ENCODE measurements at regions of chr6 and their contacts with region 1.

Region 1: DNA sequence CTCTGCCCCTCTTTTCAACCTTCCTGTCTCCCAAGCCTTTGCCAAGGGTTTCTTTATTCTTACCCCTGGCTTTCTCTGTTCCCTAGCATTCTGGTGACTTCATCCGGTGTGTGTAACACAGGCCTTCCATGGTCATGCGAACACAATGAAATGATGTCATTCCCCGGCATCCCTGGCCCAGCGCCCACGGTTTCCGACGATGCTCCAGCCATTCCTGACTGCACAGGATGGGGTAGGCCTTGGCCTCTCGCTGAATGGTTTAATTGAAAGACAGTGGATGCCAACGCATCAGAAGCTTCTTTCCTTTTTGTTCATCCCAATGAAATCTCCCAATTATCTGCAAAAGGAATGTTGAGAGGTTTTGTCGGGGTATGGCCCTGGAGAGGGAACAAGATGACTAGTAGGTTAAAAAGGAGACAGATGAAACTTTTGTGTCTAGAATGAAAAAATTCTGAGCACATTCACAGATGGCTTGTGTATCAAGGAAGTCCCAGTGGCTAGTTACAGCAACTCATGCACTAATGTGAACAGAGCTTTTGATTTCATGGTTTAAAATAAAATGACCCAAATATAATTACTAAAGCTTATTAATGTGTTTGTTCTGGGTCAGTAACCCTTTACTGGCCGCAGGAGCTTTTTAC is 655.0 kb downstream of the QKI start:
- DNase-seq: peak; percentile 74 to 86 (median 83)
- ATAC-seq: peak; percentile 85 to 98 (median 88)
- H3K4me3 ChIP-seq: no peak overlapping the region
- H3K27ac ChIP-seq: peak overlapping the region in 11 of 12 donors; percentile 43 to 78 (median 69)
- H3K4me1 ChIP-seq: peaks cover 0 to 17% (median 1%) of the 10 kb centered on the region in 12 donors
- H3K27me3 ChIP-seq: no peaks in the 10 kb centered on the region
- CTCF ChIP-seq: no peak
- POLR2A ChIP-seq: no peak

Region 2: GRCh38 chr6:163501026-163501425 is 568.4 kb before region 1 on chr6:
- intact Hi-C with region 1: no loop called
- DNase-seq: no peak
- ATAC-seq: no peak
- H3K4me3 ChIP-seq: no peak overlapping the region
- H3K27ac ChIP-seq: peak overlapping the region in 4 of 12 donors; percentile 7 to 23 (median 18)
- H3K4me1 ChIP-seq: peaks cover 6 to 93% (median 67%) of the 10 kb centered on the region in 12 donors
- H3K27me3 ChIP-seq: no peaks in the 10 kb centered on the region
- CTCF ChIP-seq: peak in 1 of 12 donors; percentile 16
- POLR2A ChIP-seq: no peak

Region 3: DNA sequence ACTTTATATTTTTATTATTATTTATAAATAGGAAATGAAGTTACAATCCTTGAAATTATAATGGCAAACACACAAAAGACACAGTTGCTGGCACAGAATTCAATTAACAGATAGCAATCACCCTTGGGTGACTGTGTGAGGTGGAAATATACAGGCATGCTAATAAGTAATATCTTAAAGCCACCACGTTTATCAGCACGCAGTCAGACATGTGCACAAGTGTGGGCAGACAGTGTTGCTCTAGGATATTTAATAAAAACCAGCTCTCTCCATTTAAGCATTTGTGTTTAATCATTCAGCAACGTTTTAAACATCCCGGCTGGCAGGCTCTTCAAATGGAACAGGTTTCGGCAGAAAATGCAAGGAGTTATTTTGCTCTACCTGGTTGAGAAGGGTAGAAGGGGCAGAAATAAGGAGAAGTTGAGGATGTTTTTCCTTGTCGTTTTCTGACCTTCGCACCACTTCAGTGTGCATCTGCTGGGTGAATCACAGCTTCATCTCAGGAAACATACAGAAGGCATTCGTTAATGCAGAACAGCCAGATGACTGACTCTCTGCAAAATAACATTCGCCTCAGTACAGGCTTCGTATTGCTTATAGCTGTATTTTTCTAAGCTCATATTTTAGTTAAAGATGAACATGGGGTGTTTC is 69.9 kb before region 1 on chr6:
- intact Hi-C with region 1: no loop called
- DNase-seq: no peak
- ATAC-seq: no peak
- H3K4me3 ChIP-seq: no peak overlapping the region
- H3K27ac ChIP-seq: no peak overlapping the region
- H3K4me1 ChIP-seq: peaks cover 0 to 9% (median 0%) of the 10 kb centered on the region in 12 donors
- H3K27me3 ChIP-seq: no peaks in the 10 kb centered on the region
- CTCF ChIP-seq: no peak
- POLR2A ChIP-seq: no peak

Region 4: DNA sequence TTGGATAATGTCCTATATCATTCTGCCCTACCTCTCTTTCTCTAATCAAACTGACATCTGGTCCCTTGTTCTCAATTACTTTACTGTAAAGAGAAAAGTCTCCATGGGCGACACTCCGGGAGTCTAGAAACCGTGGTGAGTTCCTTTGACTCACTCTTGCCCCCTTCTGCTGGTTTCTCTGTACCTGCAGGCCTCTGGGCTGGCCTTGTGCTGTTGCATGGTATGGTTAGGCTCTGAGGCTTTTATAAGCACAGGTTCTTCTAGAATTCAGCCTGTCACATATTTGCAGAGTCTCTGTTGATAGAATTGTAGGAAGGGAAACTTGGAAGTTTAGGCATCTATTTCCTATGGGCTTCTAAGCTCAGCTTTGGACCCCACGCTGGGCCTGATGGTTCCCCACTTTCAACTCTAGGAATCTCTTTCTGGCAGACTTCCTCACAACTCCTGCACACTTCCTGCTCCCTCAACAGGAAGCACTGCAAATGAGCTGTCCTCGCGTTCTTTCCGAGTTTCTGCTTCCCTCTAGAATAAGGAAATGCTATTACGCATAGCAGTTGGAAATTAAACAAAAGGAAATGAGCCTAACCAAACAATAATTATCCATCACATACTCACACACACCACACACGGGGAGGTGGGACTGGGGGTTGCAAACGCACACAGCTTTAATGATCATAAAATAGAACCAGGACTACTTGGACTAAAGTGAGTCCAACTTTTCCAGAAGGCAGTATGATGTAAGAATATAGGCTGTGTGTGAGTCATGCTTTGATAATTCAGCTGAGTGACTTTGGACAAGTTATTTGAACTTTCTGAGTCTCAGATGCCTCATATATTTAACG is 28.3 kb after region 1 on chr6:
- intact Hi-C with region 1: loop called in 1 of 10 experiments (anchors 2 kb)
- DNase-seq: peak in 3 of 5 donors; percentile 54 to 68 (median 59)
- ATAC-seq: peak; percentile 39 to 78 (median 52)
- H3K4me3 ChIP-seq: no peak overlapping the region
- H3K27ac ChIP-seq: peak overlapping the region; percentile 18 to 91 (median 84)
- H3K4me1 ChIP-seq: peaks cover 3 to 45% (median 30%) of the 10 kb centered on the region in 12 donors
- H3K27me3 ChIP-seq: no peaks in the 10 kb centered on the region
- CTCF ChIP-seq: peak; percentile 20 to 63 (median 46)
- POLR2A ChIP-seq: no peak

Region 5: GRCh38 chr6:164122109-164122508 is 52.6 kb after region 1 on chr6:
- intact Hi-C with region 1: no loop called
- DNase-seq: peak in 1 of 5 donors; percentile 23
- ATAC-seq: peak in 1 of 4 donors; percentile 38
- H3K4me3 ChIP-seq: no peak overlapping the region
- H3K27ac ChIP-seq: no peak overlapping the region
- H3K4me1 ChIP-seq: no peaks in the 10 kb centered on the region
- H3K27me3 ChIP-seq: no peaks in the 10 kb centered on the region
- CTCF ChIP-seq: no peak
- POLR2A ChIP-seq: no peak